SK-N-SH (cell line): ENCODE measurements at regions of chr16 and their contacts with region 1.

Region 1: GRCh38 chr16:53549970-53550690 is 47.1 kb upstream of the AKTIP start:
- DNase-seq: peak; percentile 85
- H3K4me3 ChIP-seq: peak overlapping the region in 1 of 2 experiments; percentile 28; a peak in 1 of 4 replicates
- H3K27ac ChIP-seq: no peak overlapping the region
- H3K4me1 ChIP-seq: peaks cover 0 to 4% of the 10 kb centered on the region in 2 experiments; a peak in 2 of 4 replicates
- H3K27me3 ChIP-seq: no peaks in the 10 kb centered on the region; the same call in 1 of the 2 replicates
- CTCF ChIP-seq: peak; percentile 77
- EP300 ChIP-seq: no peak
- RAD21 ChIP-seq: peak; percentile 96

Region 2: DNA sequence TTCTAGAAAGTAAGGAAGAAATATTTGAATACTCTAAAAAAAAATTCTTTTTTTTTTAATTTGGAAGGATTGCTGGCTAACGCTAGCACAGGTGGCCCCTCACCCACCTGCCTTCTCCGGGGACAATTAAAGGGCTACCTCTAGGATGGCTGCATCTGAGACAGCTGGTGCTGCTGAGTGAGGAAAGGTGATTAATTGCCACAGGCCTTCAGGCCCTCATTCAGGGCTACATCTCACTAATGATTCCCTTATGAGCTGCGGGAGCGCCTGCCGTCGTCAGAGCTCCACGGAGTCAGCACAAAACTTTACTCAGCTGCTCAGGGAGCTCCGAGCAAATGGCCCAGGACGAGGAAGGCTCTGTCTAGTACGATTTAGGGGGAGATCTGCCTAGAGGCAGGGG is 20.1 kb before region 1 on chr16:
- CTCF ChIA-PET with region 1: interaction called, 26 read pairs
- POLR2A ChIA-PET with region 1: no interaction called
- DNase-seq: peak; percentile 61
- H3K4me3 ChIP-seq: no peak overlapping the region
- H3K27ac ChIP-seq: no peak overlapping the region
- H3K4me1 ChIP-seq: peaks cover 0 to 14% of the 10 kb centered on the region in 2 experiments; a peak in 1 of 4 replicates
- H3K27me3 ChIP-seq: no peaks in the 10 kb centered on the region; the same call in 1 of the 2 replicates
- CTCF ChIP-seq: no peak
- EP300 ChIP-seq: no peak
- RAD21 ChIP-seq: no peak